Thyroid gland (tissue), 4 donors: ENCODE measurements at regions of chr7 and their contacts with region 1.

Region 1: DNA sequence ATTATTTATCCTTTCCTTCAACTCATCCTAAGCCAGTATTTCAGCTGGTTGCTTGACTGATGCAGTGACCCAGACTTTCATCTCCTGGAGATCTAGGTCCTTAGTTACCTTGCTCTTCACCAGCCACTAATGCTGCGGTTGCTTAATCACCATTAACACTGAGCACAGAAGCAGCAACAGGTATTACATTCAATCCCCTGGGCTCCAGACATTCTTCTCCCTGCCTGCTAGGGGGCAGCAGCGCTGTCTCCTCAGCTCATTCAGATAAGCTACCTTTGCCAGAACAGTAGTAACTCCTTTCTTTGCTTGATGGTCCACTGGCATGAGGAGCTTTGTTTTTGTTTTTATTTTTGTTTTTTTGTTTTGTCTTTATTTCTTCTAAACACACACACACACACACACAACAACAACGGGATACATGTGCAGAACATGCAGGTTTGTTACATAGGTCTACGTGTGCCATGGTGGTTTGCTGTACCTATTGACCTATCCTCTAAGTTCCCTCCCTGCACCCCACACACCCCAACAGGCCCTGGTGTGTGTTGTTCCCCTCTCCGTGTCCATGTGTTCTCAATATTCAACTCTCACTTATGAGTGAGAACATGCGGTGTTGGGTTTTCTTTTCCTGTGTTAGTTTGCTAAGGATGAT is 1043.2 kb upstream of the C7orf33 start:
- DNase-seq: peak; percentile 33 to 64
- H3K4me3 ChIP-seq: no peak overlapping the region
- H3K27ac ChIP-seq: no peak overlapping the region
- H3K4me1 ChIP-seq: no peaks in the 10 kb centered on the region
- H3K27me3 ChIP-seq: no peaks in the 10 kb centered on the region
- CTCF ChIP-seq: peak in 4 of 6 experiments; percentile 31 to 62 (median 56)
- POLR2A ChIP-seq: no peak

Region 2: GRCh38 chr7:147646568-147646967 is 99.2 kb after region 1 on chr7:
- intact Hi-C with region 1: loop called (anchors 5 kb)
- DNase-seq: no peak
- H3K4me3 ChIP-seq: no peak overlapping the region
- H3K27ac ChIP-seq: no peak overlapping the region
- H3K4me1 ChIP-seq: no peaks in the 10 kb centered on the region
- H3K27me3 ChIP-seq: no peaks in the 10 kb centered on the region
- CTCF ChIP-seq: no peak
- POLR2A ChIP-seq: no peak

Region 3: DNA sequence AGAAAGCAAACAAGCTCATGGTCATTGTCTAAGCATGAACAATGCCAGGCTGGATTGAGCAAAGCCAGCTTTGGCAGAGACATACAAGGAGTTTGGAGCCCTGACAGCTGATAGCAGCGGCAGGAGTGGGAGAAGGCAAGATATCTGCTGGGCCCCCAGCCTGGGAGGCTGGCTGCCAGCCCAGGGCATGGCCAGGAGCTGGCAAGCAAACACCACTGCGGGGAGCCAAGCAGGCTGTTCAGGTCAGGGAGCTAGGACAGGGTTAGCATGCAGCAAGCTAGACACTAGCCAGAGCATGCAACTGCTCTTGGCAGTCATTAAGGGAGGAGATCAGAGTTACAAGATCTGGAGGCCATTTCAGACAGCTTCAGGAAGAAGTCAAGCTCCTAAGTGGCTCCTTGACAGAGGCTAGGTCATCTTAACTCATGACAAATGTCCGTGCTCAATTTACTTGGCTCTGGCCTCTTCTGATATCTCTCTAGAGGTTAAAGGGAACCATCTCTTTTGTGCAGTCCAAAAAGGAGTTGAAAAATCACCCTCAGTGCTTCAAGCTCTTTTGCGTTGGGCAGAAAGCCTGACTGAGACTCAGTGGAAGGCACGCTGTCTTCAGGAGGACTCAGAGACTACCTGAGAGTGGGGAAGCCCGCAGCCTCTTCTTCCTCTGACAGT is 606.4 kb after region 1 on chr7:
- intact Hi-C with region 1: loop called (anchors 10 kb)
- DNase-seq: peak; percentile 72
- H3K4me3 ChIP-seq: no peak overlapping the region
- H3K27ac ChIP-seq: peak overlapping the region in 1 of 3 donors; percentile 5
- H3K4me1 ChIP-seq: peaks cover 8% of the 10 kb centered on the region in 2 donors
- H3K27me3 ChIP-seq: no peaks in the 10 kb centered on the region
- CTCF ChIP-seq: no peak
- POLR2A ChIP-seq: no peak

Region 4: DNA sequence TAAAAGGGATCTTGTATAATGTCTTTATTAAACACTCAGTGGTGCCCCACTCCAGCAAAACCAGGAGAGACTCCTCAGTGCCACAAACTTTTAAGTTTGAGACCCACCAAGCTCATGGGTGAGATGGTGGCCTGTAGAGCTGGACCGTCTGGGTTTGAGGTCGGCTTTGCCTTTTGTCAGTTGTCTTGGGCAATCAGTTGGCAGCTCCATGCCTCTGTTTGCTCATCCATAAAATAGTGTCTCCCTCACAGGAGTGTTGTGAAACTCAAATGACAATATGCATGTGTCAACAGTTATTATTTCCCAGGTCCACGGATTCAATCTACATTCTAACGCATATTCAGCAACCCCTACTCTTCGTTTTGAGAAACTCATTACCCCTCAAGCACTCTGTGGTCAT is 675.3 kb after region 1 on chr7:
- intact Hi-C with region 1: no loop called
- DNase-seq: no peak
- H3K4me3 ChIP-seq: no peak overlapping the region
- H3K27ac ChIP-seq: no peak overlapping the region
- H3K4me1 ChIP-seq: peaks cover 0 to 5% of the 10 kb centered on the region in 2 donors
- H3K27me3 ChIP-seq: no peaks in the 10 kb centered on the region
- CTCF ChIP-seq: no peak
- POLR2A ChIP-seq: no peak